Mucosa of descending colon (tissue), 3 donors: ENCODE measurements at regions of chrX and their contacts with region 1.

Region 1: GRCh38 chrX:68822641-68823410 is 6.0 kb upstream of the EFNB1 start:
- DNase-seq: peak; percentile 41 to 42 (median 41)
- ATAC-seq: peak; percentile 77
- H3K4me3 ChIP-seq: no peak overlapping the region
- H3K4me1 ChIP-seq: no peaks in the 10 kb centered on the region
- CTCF ChIP-seq: peak; percentile 12

Region 2: GRCh38 chrX:68732906-68733493 is 89.8 kb before region 1 on chrX:
- intact Hi-C with region 1: loop called in 1 of 2 experiments (anchors 10 kb)
- DNase-seq: peak in 2 of 3 donors; percentile 72 to 74
- ATAC-seq: peak; percentile 81
- H3K4me3 ChIP-seq: no peak overlapping the region
- H3K4me1 ChIP-seq: no peaks in the 10 kb centered on the region
- CTCF ChIP-seq: peak; percentile 21

Region 3: DNA sequence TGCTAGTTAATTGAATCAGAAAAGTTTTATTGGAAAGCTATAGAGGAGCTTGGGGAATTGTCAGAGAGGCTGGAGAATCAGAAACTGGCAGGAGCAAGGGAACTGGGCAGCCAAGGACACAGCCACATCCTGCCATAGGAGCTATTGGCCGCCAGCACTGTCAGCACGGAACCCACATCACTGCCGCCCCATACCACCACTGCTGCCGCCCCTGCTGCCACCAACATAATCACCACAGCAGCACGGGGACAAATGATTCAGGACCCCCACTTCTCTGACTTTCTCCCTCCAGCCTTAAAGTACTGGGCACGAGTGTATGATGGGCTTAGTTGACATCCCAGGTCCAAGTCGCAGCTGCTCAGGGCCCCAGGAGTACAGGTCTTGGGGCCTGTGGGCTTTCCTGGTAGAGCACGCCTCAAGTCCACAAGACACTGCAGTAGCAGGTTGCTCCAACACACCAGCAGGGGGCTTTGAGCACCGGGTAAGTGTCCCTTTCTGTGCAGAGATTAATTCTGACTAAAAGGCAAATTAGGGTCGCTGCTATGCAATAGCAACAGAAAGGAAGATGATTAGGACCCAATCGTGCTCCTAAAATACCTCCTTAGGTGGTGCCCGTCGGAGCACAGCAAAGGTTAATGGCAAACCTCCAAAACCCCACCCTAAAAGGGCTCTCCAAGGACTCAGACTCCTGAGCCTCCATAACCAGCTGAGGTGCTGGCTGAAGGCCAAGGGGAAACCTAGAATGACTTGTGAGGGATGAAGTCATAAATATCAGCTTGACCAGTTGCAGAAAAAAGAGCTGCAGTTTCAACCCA is 335.5 kb after region 1 on chrX:
- intact Hi-C with region 1: no loop called
- DNase-seq: peak in 1 of 3 donors; percentile 40
- ATAC-seq: peak; percentile 57
- H3K4me3 ChIP-seq: no peak overlapping the region
- H3K4me1 ChIP-seq: no peaks in the 10 kb centered on the region
- CTCF ChIP-seq: no peak

Region 4: DNA sequence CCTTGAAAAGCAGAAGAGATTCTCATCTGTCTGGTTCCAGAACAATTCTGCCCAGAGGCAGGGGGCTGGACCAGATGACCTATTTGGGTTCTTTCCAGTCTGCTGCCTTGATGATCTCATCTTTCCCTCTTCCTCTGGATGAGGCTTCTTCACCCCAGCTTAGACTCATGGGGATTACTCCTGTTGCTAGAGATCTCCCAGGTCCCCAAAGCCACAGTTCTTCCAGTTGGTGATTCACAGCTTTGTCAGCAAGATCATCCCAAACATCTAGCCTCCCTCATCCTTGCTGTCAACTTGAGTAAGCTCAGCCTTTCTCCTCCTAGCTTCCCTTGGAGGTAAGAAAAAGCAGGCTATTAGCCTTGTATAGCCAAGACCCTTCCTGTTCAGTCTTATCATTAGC is 406.6 kb after region 1 on chrX:
- intact Hi-C with region 1: loop called (anchors 5 to 10 kb)
- DNase-seq: no peak
- ATAC-seq: peak; percentile 19
- H3K4me3 ChIP-seq: no peak overlapping the region
- H3K4me1 ChIP-seq: no peaks in the 10 kb centered on the region
- CTCF ChIP-seq: no peak